IMR-90 (cell line): ENCODE measurements at regions of chr7 and their contacts with region 1.

Region 1: DNA sequence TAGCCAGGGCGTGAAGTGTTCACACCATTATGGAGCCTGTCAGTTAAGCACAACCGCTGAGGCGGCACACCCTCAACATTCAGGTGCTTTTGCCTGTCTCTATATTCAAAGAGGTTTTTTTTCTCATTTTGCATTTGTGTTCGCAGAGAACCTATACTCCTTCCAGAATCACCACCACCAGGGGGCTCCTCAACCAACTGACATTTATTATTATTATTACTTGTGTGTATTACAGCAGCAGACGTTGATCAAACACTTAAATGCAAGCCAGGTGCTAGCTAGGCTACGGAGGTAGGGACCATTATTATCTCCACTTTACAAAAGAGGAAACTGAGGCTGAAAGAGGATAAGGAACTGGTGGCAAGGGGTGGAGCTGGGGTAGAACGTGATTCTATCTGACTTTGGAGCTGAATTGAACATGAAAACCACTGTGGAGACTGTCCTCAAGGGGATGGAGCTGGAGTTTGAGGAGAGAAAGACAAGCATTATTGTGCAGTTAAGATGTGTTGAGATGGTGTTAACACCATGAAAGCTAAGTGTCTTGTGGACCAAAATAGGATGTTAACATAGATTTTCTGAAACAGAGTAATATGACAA is 133.8 kb upstream of the PLXNA4 start:
- DNase-seq: peak; percentile 41
- ATAC-seq: peak; percentile 56
- H3K4me3 ChIP-seq: no peak overlapping the region
- H3K27ac ChIP-seq: no peak overlapping the region
- H3K4me1 ChIP-seq: no peaks in the 10 kb centered on the region
- H3K27me3 ChIP-seq: no peaks in the 10 kb centered on the region; the same call in 1 of the 2 replicates
- CTCF ChIP-seq: peak; percentile 58
- POLR2A ChIP-seq: no peak
- RAD21 ChIP-seq: peak; percentile 62

Region 2: DNA sequence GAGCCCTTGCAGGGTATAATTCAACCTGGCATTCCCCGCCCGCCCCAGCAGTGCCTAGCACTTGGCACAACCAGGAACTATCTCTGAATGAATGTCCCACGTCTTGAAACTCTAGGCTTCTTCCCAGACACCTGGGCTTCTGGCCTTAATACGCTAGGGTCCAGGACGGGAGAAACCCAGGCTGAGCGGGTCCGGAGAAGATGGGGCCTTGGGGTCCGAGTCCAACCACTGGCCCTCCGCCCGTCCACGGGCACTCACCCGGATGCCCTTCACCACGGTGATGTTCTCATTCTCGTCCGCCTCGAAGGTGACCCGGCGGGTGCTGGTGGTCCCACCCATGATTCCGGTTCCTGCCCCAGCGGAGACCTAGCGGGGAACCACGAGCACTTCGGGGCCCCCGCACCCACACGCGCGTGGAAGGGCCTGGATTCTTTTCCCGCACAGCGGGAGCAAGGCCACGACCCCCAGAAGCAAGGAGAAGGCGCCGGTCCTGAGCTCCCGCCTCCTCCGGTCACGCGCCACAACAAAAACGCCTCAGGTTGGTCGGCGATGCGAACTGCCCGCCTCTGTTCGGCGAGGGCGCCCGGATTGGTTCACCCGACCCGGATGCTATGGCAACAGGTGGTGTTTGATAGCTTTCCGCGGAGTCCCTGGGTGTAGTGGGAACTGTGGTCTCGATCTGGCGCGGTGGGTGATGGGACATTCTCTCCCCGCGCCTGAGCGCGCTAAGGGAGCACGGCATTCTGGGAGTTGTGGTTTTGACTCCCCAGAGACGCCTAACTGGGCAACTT is 371.7 kb after region 1 on chr7 and contains the start of gene CHCHD3:
- CTCF ChIA-PET with region 1: no interaction called
- POLR2A ChIA-PET with region 1: no interaction called
- dilution Hi-C with region 1: no loop called
- in situ Hi-C with region 1: no loop called
- intact Hi-C with region 1: loop called (anchors 1 kb)
- DNase-seq: peak; percentile 98
- ATAC-seq: peak; percentile 99
- H3K4me3 ChIP-seq: peak within 1 kb of the TSS; percentile 79
- H3K27ac ChIP-seq: peak within 1 kb of the TSS; percentile 82
- H3K4me1 ChIP-seq: peaks cover 2% of the 10 kb centered on the region; the same call in 1 of the 2 replicates
- H3K27me3 ChIP-seq: no peaks in the 10 kb centered on the region
- CTCF ChIP-seq: no peak
- POLR2A ChIP-seq: peak; percentile 43; the same call in 1 of the 2 replicates
- RAD21 ChIP-seq: no peak
- total RNA-seq, gene CHCHD3: 122 and 141 TPM in 2 replicates

Region 3: GRCh38 chr7:133230591-133231194 is 520.6 kb after region 1 on chr7:
- CTCF ChIA-PET with region 1: no interaction called
- POLR2A ChIA-PET with region 1: no interaction called
- dilution Hi-C with region 1: no loop called
- in situ Hi-C with region 1: no loop called
- intact Hi-C with region 1: loop called (anchors 1 kb)
- DNase-seq: peak; percentile 56
- ATAC-seq: peak; percentile 73
- H3K4me3 ChIP-seq: no peak overlapping the region
- H3K27ac ChIP-seq: no peak overlapping the region
- H3K4me1 ChIP-seq: no peaks in the 10 kb centered on the region
- H3K27me3 ChIP-seq: peaks cover 7% of the 10 kb centered on the region
- CTCF ChIP-seq: peak; percentile 74
- POLR2A ChIP-seq: no peak
- RAD21 ChIP-seq: peak; percentile 73

Region 4: DNA sequence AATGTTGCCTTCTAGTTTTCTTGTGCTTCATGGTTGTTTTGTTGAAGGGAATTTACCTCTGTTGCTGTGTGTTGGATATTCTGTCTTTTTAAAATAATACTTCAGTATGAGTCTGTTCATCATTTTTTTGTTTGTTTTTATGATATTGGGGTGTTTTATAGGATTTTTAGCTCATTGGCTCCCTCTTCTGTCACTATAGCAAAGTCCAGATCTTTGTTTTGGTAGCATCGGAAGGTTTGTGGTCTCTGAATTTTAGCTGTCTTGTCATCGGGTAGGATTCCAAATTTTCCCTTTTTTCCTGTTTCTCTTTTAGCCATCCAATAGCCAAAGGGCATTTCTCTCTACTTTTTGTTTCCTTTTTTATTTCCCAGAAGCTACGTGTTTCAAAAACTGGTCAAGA is 634.2 kb after region 1 on chr7:
- CTCF ChIA-PET with region 1: no interaction called
- POLR2A ChIA-PET with region 1: no interaction called
- dilution Hi-C with region 1: no loop called
- in situ Hi-C with region 1: no loop called
- intact Hi-C with region 1: loop called (anchors 1 kb)
- DNase-seq: peak; percentile 32
- ATAC-seq: peak; percentile 59
- H3K4me3 ChIP-seq: no peak overlapping the region
- H3K27ac ChIP-seq: no peak overlapping the region
- H3K4me1 ChIP-seq: no peaks in the 10 kb centered on the region
- H3K27me3 ChIP-seq: no peaks in the 10 kb centered on the region
- CTCF ChIP-seq: peak; percentile 63
- POLR2A ChIP-seq: no peak
- RAD21 ChIP-seq: peak; percentile 64

Region 5: DNA sequence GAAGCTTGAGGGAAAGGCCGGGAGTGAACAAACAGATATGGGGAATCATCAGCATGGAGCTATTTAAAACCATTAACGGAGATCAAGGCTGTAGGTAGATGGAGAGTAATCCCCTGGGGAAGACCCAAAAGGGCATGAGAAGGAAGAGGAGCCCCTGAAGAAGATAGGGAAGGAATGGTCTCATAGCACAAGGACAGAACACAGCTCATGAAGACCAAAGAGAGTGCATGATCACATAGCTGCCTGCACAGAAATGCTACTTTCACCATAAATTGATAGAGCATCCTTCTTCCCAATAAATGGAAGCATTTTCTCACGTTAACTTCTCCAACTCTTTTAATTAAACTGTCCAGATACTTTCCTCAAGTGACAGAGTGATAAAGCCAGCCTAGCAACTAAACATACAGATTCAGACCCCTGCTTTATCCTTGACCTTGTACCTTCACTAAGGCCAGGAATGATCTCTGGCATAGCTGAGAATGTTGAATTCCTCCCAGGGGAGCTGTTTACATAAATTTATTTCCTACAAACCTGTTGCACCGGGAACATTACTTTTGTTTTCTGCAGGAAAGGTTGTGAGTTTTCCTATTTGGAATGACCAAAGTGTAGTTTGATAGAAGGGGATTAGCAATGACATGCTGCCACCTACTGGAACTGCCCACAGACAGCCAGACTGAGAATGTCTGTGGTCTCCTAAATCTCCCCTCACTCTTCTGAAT is 1306.3 kb after region 1 on chr7:
- CTCF ChIA-PET with region 1: no interaction called
- POLR2A ChIA-PET with region 1: no interaction called
- dilution Hi-C with region 1: no loop called
- in situ Hi-C with region 1: loop called (anchors 25 kb)
- intact Hi-C with region 1: loop called (anchors 5 kb)
- DNase-seq: peak; percentile 39
- ATAC-seq: peak; percentile 77
- H3K4me3 ChIP-seq: no peak overlapping the region
- H3K27ac ChIP-seq: no peak overlapping the region
- H3K4me1 ChIP-seq: no peaks in the 10 kb centered on the region
- H3K27me3 ChIP-seq: no peaks in the 10 kb centered on the region
- CTCF ChIP-seq: peak; percentile 67
- POLR2A ChIP-seq: no peak
- RAD21 ChIP-seq: peak; percentile 76

Region 6: GRCh38 chr7:134420424-134421125 is 1710.5 kb after region 1 on chr7:
- CTCF ChIA-PET with region 1: interaction called, 3 read pairs
- POLR2A ChIA-PET with region 1: no interaction called
- dilution Hi-C with region 1: no loop called
- in situ Hi-C with region 1: no loop called
- intact Hi-C with region 1: loop called (anchors 5 kb)
- DNase-seq: peak; percentile 55
- ATAC-seq: peak; percentile 94
- H3K4me3 ChIP-seq: no peak overlapping the region
- H3K27ac ChIP-seq: no peak overlapping the region
- H3K4me1 ChIP-seq: no peaks in the 10 kb centered on the region
- H3K27me3 ChIP-seq: peaks cover 15% of the 10 kb centered on the region
- CTCF ChIP-seq: peak; percentile 76
- POLR2A ChIP-seq: no peak
- RAD21 ChIP-seq: peak; percentile 77